ENCODE measurements at regions of chr2 and their contacts with region 1.

Region 1: GRCh38 chr2:190979906-190980629 is 33.9 kb downstream of the STAT1 start:
- DNase-seq: no peak
- ATAC-seq: no peak
- H3K4me3 ChIP-seq: no peak overlapping the region
- H3K27ac ChIP-seq: no peak overlapping the region
- H3K4me1 ChIP-seq: no peaks in the 10 kb centered on the region
- H3K27me3 ChIP-seq: no peaks in the 10 kb centered on the region
- CTCF ChIP-seq: no peak
- EP300 ChIP-seq: no peak
- POLR2A ChIP-seq: no peak
- RAD21 ChIP-seq: no peak

Region 2: DNA sequence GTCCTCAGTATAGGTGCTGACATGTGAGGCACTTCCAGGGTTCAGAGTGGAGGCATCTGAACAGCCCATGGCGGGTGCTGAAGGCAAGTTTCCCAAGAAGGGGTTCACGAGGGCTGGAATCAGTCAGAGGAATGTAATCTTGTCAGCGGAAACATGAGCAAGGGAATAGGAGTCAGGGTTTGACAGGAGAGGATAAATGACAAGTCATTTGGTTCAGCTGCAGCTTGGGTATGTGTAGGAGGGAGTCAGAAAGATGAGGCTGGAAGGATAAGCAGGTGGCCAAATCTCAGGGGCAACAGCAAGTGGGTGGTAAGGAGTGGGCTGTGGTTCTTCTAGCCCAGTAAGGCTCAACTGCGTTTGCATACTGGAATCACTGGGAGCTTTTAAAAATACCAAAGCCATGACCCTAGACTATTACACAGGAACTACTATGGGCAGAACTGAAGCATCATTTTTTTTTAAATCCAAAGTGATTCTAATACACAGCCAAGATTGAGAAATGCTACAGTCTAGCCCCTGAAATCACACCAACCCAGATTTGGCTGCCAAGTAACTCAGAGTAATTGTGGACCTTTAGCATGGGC is 373.0 kb before region 1 on chr2:
- CTCF ChIA-PET with region 1: no interaction called
- POLR2A ChIA-PET with region 1: no interaction called
- in situ Hi-C with region 1: no loop called
- intact Hi-C with region 1: loop called (anchors 10 kb)
- DNase-seq: no peak
- ATAC-seq: no peak
- H3K4me3 ChIP-seq: no peak overlapping the region
- H3K27ac ChIP-seq: no peak overlapping the region
- H3K4me1 ChIP-seq: peaks cover 15% of the 10 kb centered on the region
- H3K27me3 ChIP-seq: no peaks in the 10 kb centered on the region
- CTCF ChIP-seq: no peak
- EP300 ChIP-seq: no peak
- POLR2A ChIP-seq: no peak
- RAD21 ChIP-seq: no peak

Region 3: GRCh38 chr2:190961918-190962487 is 18.1 kb before region 1 on chr2:
- CTCF ChIA-PET with region 1: no interaction called
- POLR2A ChIA-PET with region 1: no interaction called
- in situ Hi-C with region 1: no loop called
- intact Hi-C with region 1: no loop called
- DNase-seq: no peak
- ATAC-seq: no peak
- H3K4me3 ChIP-seq: no peak overlapping the region
- H3K27ac ChIP-seq: no peak overlapping the region
- H3K4me1 ChIP-seq: peaks cover 19% of the 10 kb centered on the region
- H3K27me3 ChIP-seq: no peaks in the 10 kb centered on the region
- CTCF ChIP-seq: no peak
- EP300 ChIP-seq: no peak
- POLR2A ChIP-seq: no peak
- RAD21 ChIP-seq: no peak